Activated T-helper 2 cell treated with anti-CD3 and anti-CD28 coated beads, Interferon-gamma antibody, Interleukin-2, Interleukin-4, amounts not matched to agents 10 μg/mL and 5 μg/mL and 100 μg/mL, durations not matched to agents 14 hours and 24 hours and 36 hours (primary cell): ENCODE measurements at regions of chr2 and their contacts with region 1.

Region 1: DNA sequence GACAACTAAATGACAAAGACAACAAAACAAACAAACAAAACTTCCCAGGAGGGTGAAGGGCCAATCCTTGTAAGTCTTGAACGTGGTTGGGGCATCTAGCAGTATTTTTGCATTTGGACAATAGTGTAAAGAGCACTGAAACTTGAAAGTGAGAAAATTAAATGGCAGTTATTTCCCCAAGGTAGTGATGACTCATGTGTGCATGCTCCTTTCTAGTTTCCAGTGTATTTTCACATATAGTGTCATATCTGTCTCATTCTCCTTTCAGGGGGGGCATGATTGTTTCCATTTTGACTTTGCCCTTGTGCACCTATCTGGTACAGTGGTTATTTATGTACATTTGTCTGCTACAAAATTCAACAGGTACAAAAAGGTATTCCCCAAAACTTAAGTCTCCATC is 39.5 kb downstream of the CERS6 start:
- DNase-seq: no peak
- H3K4me3 Mint-ChIP-seq: no peak overlapping the region
- H3K27ac Mint-ChIP-seq: peak overlapping the region; percentile 50
- H3K4me1 Mint-ChIP-seq: peaks cover 62% of the 10 kb centered on the region
- H3K27me3 Mint-ChIP-seq: no peaks in the 10 kb centered on the region

Region 2: DNA sequence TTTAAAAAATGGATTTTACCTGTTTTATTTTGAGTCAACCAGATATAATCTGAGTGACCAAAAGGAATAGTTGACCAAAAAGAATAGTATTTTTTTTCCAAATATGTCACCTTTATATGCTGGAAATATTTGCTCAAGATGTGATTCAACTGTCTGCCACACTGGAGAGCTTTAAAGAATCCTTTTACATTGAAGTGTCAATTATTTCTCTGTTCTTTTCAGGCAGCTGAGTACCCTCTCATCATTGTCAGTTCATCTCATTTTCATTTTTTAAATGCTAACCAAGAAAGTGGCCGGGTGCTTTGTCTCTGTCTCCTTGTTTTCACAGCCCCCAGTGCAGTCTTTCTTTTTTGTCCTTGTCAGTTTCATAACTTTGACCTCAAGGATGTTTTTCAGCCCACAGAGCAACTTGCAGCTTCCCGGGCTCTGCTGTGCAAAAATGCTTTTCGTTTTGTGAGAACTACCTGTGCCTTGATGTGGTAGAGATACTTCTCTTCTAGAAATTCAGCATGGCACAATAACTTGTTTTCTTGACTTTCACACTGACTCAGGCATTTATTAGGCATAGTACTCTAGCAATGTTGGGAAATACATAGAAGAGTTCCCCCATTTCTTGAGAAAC is 62.8 kb before region 1 on chr2:
- intact Hi-C with region 1: loop called (anchors 1 kb)
- DNase-seq: peak; percentile 46
- H3K4me3 Mint-ChIP-seq: peak overlapping the region; percentile 14
- H3K27ac Mint-ChIP-seq: peak overlapping the region; percentile 84
- H3K4me1 Mint-ChIP-seq: peaks cover 35% of the 10 kb centered on the region
- H3K27me3 Mint-ChIP-seq: no peaks in the 10 kb centered on the region

Region 3: DNA sequence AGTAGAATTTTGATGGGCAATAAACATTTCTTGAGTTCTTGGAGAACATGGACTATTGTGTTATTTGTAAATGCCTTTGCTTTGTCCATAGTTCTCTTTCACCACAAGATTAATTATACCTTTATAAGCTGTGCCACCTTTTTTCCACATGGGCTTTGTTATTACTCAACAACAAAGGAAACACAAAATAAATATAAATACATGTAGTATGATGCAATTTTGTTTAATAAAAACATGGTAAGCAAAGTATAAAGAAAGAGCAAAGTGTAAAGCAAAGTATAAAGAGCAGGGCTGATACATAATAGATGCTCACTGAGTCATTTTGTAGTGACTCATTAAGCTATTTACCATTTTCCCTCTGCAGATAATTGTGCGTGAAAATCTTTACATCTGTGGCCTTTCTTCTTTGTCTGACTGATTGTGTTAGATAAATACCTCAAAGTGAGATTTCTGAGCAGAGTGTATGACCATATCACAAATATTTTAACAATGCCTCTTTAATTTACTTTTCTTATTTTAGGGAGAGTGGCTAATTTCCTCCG is 41.5 kb after region 1 on chr2:
- intact Hi-C with region 1: loop called (anchors 1 kb)
- DNase-seq: no peak
- H3K4me3 Mint-ChIP-seq: no peak overlapping the region
- H3K27ac Mint-ChIP-seq: peak overlapping the region; percentile 33
- H3K4me1 Mint-ChIP-seq: peaks cover 49% of the 10 kb centered on the region
- H3K27me3 Mint-ChIP-seq: no peaks in the 10 kb centered on the region

Region 4: DNA sequence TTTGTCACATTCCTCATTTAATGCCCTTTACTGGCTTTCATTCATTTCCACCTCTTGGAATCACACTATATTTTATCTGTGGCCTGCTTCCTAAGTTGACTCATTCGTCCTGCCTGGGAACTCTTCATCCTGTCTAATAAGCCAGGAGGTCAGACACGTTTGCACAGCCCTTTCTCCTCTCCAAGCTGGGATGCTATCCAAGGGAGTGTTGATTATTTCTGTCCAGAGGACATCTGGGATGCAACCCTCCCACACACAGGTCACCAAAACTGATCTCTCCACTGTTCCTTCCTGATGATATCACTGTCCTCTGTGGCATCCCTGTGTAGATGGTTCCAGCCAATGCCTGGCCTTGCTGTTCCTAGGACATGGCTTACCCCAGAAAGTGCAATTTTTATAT is 227.1 kb after region 1 on chr2:
- intact Hi-C with region 1: no loop called
- DNase-seq: no peak
- H3K4me3 Mint-ChIP-seq: no peak overlapping the region
- H3K27ac Mint-ChIP-seq: no peak overlapping the region
- H3K4me1 Mint-ChIP-seq: peaks cover 20% of the 10 kb centered on the region
- H3K27me3 Mint-ChIP-seq: no peaks in the 10 kb centered on the region

Region 5: GRCh38 chr2:169438460-169439072 is 943.0 kb after region 1 on chr2:
- intact Hi-C with region 1: no loop called
- DNase-seq: no peak
- H3K4me3 Mint-ChIP-seq: no peak overlapping the region
- H3K27ac Mint-ChIP-seq: no peak overlapping the region
- H3K4me1 Mint-ChIP-seq: peaks cover 4% of the 10 kb centered on the region
- H3K27me3 Mint-ChIP-seq: peaks cover 39% of the 10 kb centered on the region